ENCODE measurements at regions of chr7 and their contacts with region 1.

Region 1: GRCh38 chr7:140517546-140518369 is 38.5 kb upstream of the MKRN1 start:
- DNase-seq: peak; percentile 84 to 96 (median 91)
- H3K4me3 ChIP-seq: no peak overlapping the region
- H3K27ac ChIP-seq: no peak overlapping the region
- H3K4me1 ChIP-seq: no peaks in the 10 kb centered on the region
- H3K27me3 ChIP-seq: no peaks in the 10 kb centered on the region
- CTCF ChIP-seq: peak; percentile 81 to 94 (median 94)
- POLR2A ChIP-seq: no peak

Region 2: DNA sequence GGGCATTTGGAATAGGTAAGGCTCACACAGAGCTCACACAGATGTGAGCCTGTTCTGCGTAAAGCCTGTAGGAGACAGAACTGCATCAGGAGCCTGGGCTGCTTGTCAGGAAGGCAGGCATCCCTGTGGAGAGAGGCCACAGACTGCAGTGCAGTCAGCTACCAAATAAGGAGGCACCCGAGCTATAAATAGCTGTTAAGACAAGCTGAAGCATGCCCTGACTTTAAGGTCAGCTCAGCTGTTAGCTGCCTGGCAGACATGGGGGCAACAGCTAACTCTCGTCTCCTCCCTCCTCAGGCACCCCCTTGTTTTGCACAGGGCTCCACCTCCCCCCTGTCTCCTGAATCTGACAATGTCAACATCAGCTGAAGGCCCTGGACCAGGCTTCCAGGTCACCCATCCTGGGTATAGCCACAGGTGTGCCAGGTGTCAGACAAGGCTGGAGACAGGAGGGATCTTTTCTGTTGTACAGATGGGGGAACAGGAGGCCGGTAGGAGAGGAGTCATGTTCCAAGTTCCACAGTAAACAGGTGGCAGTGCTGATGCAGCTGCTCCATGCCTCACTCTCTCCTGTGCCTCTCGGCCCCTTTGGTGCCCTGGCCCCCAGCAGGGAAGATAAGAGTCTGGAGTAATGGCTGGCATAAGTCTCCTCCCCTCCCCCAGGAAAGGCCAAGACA is 10.8 kb before region 1 on chr7:
- intact Hi-C with region 1: no loop called
- DNase-seq: peak in 1 of 7 donors; percentile 72
- H3K4me3 ChIP-seq: no peak overlapping the region
- H3K27ac ChIP-seq: no peak overlapping the region
- H3K4me1 ChIP-seq: no peaks in the 10 kb centered on the region
- H3K27me3 ChIP-seq: no peaks in the 10 kb centered on the region
- CTCF ChIP-seq: no peak
- POLR2A ChIP-seq: no peak

Region 3: DNA sequence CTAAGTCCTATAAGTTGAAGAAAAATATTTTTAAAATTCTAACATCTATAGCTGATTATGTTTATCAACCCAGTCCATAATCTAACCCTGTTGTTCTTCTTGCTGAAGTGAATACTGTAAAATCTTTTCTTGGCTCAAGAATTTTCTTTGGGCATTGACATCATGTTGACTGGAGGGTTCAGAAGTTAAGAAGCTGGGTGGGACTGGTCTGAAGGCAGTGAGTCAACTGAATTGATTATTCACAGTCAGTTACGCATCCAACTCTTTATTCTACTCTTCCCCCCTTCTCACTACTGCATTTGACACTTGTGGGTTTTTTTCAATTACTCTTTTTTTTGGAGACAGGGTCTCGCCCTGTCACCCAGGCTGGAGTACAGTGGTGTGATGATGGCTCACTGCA is 91.9 kb after region 1 on chr7:
- intact Hi-C with region 1: no loop called
- DNase-seq: no peak
- H3K4me3 ChIP-seq: no peak overlapping the region
- H3K27ac ChIP-seq: no peak overlapping the region
- H3K4me1 ChIP-seq: peaks cover 0 to 13% of the 10 kb centered on the region in 2 donors
- H3K27me3 ChIP-seq: no peaks in the 10 kb centered on the region
- CTCF ChIP-seq: no peak
- POLR2A ChIP-seq: no peak

Region 4: GRCh38 chr7:140653319-140654108 is 135.8 kb after region 1 on chr7:
- intact Hi-C with region 1: loop called (anchors 1 to 2 kb)
- DNase-seq: peak; percentile 59 to 79 (median 66)
- H3K4me3 ChIP-seq: no peak overlapping the region
- H3K27ac ChIP-seq: no peak overlapping the region
- H3K4me1 ChIP-seq: peaks cover 0 to 9% of the 10 kb centered on the region in 2 donors
- H3K27me3 ChIP-seq: no peaks in the 10 kb centered on the region
- CTCF ChIP-seq: peak; percentile 82 to 95 (median 90)
- POLR2A ChIP-seq: no peak

Region 5: GRCh38 chr7:140902303-140902953 is 384.7 kb after region 1 on chr7:
- intact Hi-C with region 1: no loop called
- DNase-seq: no peak
- H3K4me3 ChIP-seq: no peak overlapping the region
- H3K27ac ChIP-seq: no peak overlapping the region
- H3K4me1 ChIP-seq: peaks cover 0 to 6% of the 10 kb centered on the region in 2 donors
- H3K27me3 ChIP-seq: no peaks in the 10 kb centered on the region
- CTCF ChIP-seq: no peak
- POLR2A ChIP-seq: no peak

Region 6: GRCh38 chr7:141208539-141208938 is 690.8 kb after region 1 on chr7:
- intact Hi-C with region 1: no loop called
- DNase-seq: no peak
- H3K4me3 ChIP-seq: no peak overlapping the region
- H3K27ac ChIP-seq: no peak overlapping the region
- H3K4me1 ChIP-seq: no peaks in the 10 kb centered on the region
- H3K27me3 ChIP-seq: no peaks in the 10 kb centered on the region
- CTCF ChIP-seq: no peak
- POLR2A ChIP-seq: no peak

Measured in adrenal gland (tissue), 19 donors.